MCF 10A (cell line): ENCODE measurements at regions of chr10 and their contacts with region 1.

Region 1: DNA sequence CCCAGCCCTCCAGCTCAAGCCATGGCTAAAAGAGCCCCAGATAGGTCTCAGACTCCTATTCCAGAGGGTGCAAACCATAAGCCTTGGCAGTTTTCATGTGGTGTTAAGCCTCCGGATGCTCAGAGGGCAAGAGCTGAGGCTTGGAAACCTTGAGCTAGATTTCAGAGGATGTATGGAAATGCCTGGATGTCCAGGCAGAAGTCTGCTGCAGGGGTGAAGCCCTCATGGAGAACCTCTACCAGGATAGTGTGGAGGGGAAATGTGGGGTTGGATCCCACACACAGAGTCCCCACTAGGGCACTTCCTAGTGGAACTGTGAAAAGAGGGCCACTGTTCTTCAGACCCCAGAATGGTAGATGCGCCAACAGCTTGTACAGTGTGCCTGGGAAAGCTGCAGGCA is 13.2 kb upstream of the HPSE2 start:
- DNase-seq: no peak
- H3K4me3 Mint-ChIP-seq: no peak overlapping the region
- H3K27ac Mint-ChIP-seq: no peak overlapping the region
- H3K4me1 Mint-ChIP-seq: no peaks in the 10 kb centered on the region
- H3K27me3 Mint-ChIP-seq: no peaks in the 10 kb centered on the region
- CTCF ChIP-seq: no peak

Region 2: DNA sequence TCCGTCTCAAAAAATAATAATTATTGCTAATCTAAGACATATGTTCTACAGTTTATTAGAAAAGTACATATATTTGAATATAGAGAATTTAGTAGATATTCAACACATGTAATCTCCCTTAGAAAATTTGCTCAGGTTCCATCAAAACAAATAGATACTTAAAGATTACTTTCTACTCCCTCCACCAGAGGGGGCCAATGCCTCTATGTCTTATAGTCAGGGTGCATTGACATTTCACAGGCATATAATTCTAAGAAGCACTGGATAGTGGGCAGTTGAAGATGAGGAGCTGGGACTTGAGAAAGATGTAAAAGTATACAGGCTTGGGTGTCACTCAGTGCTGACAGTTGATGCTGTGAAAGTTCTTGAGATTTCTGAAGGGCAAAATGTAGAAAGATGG is 500.5 kb before region 1 on chr10:
- CTCF ChIA-PET with region 1: no interaction called
- POLR2A ChIA-PET with region 1: no interaction called
- intact Hi-C with region 1: loop called (anchors 1 kb)
- DNase-seq: peak; percentile 62
- H3K4me3 Mint-ChIP-seq: no peak overlapping the region
- H3K27ac Mint-ChIP-seq: no peak overlapping the region
- H3K4me1 Mint-ChIP-seq: no peaks in the 10 kb centered on the region
- H3K27me3 Mint-ChIP-seq: no peaks in the 10 kb centered on the region
- CTCF ChIP-seq: peak; percentile 13

Region 3: DNA sequence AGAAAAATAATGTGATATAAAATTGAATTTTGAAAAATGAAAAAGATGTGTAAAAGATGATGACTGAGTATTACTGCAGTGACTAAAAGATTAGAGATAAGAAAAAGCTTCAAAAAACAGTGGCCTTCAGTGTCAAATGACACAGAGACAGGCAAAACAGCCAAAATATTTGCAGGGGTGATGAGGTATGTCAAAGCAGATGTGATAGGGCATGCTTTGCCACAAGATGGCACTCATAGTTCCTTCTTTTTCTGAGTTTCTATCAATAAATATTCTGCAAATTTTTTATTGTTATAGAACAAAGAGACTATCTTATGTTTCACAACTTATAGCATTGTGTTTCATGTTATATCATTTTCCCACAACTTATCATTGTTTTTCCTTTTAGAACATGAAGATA is 458.0 kb before region 1 on chr10:
- CTCF ChIA-PET with region 1: interaction called, 3 read pairs
- POLR2A ChIA-PET with region 1: no interaction called
- intact Hi-C with region 1: loop called (anchors 5 kb)
- DNase-seq: peak; percentile 18
- H3K4me3 Mint-ChIP-seq: no peak overlapping the region
- H3K27ac Mint-ChIP-seq: no peak overlapping the region
- H3K4me1 Mint-ChIP-seq: no peaks in the 10 kb centered on the region
- H3K27me3 Mint-ChIP-seq: peaks cover 22% of the 10 kb centered on the region
- CTCF ChIP-seq: peak; percentile 41

Region 4: GRCh38 chr10:99042051-99042771 is 206.6 kb before region 1 on chr10:
- CTCF ChIA-PET with region 1: no interaction called
- POLR2A ChIA-PET with region 1: no interaction called
- intact Hi-C with region 1: loop called (anchors 2 kb)
- DNase-seq: no peak
- H3K4me3 Mint-ChIP-seq: no peak overlapping the region
- H3K27ac Mint-ChIP-seq: no peak overlapping the region
- H3K4me1 Mint-ChIP-seq: no peaks in the 10 kb centered on the region
- H3K27me3 Mint-ChIP-seq: no peaks in the 10 kb centered on the region
- CTCF ChIP-seq: no peak

Region 5: DNA sequence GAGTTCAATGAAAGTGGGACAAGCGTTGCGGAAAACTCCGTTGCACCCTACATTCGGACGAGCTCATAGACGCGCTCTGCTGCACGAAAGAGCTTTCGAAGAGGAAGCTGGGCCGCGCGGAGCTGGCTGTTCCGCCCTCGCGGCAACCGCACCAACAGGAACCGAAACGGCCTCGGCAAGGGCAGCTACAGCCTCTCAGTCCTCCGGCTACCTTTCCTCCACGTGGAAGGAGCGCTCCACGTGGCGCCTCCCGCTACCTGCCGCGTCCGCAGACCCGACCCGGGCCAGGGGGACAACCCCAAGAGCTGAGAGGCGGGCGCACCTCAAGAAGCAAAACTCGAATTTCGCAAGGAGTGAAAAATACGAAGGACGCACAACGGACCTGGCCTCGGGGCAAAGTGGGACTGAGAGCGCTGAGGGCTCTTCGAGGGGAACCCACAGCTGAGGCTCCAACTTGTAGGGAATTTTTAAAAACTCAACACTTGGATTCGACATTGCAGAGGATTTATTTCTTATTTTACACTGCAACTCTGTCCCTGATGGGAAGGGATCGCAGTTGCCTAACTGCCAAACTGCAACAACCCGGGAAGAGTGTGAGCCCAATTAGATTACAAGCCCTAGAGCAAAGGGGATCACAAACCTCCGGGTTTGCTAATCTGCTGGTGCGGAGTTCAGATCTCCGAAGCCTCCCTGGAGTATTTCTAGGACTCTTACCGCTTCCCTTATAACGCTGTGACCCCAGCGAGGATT is 14.6 kb before region 1 on chr10:
- CTCF ChIA-PET with region 1: interaction called, 14 read pairs
- POLR2A ChIA-PET with region 1: no interaction called
- intact Hi-C with region 1: no loop called
- DNase-seq: no peak
- H3K4me3 Mint-ChIP-seq: no peak overlapping the region
- H3K27ac Mint-ChIP-seq: no peak overlapping the region
- H3K4me1 Mint-ChIP-seq: peaks cover 6% of the 10 kb centered on the region
- H3K27me3 Mint-ChIP-seq: peaks cover 81% of the 10 kb centered on the region
- CTCF ChIP-seq: no peak